Aorta (tissue), 5 donors: ENCODE measurements at regions of chr9 and their contacts with region 1.

Region 1: DNA sequence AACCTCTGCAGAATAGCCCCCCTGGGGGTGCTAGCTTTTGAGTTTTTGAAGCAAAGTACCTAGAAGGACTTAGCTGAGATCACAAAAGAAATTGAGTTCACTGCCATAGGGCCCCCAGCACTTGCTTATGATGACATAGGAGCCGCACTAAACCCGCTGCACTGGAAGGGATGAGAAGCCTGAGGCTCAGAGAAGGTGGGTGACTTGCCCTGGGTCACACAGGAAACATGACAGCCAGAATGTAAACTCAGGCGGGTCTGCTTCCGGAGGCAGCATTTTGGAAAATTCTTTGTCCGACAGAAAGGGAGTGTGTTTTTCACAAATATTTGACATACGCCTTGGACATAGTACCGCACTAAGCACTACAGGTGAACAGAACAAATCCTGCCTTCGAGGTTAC is 8.4 kb upstream of the TOR1B start:
- DNase-seq: no peak
- ATAC-seq: no peak
- H3K4me3 ChIP-seq: no peak overlapping the region
- H3K27ac ChIP-seq: no peak overlapping the region
- H3K4me1 ChIP-seq: no peaks in the 10 kb centered on the region
- H3K27me3 ChIP-seq: no peaks in the 10 kb centered on the region

Region 2: DNA sequence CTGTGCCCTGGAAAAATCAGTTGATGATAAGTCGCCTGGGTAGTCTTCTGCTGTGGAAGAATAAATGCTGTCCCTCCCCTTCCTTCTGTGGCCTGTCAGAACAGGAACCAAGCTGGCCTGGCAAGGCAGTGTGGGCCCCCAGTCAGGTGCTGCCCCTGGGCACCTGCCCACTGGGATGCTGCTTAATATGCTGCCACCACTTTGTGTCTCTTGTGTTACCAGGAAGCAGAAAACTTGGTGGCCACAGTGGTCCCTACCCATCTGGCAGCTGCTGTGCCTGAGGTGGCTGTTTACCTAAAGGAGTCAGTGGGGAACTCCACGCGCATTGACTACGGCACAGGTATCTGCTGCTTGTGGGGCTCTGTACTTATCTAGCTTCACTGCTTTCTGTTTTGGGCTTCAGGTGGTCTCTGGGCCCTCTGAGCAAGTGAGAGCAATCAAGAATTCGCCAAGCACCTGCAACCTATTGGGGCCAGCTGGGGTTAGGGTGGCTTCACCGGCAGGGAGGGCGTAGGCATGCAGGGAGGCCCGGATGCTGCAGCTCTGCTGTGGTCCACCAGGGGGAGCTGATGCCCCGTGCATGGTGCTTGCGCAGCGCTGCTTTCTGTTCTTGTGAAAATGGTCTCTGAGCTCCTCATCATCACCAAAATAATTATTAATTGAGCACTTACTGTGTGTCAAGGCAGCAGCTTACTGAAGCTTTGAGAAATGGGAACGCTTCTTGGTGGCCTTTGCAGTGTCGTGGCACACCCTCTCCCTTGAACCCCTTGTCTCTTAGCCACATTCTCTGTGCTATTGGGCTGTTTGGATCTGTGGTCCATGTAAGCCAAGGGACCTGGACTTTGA is 663.0 kb before region 1 on chr9:
- intact Hi-C with region 1: loop called (anchors 5 kb)
- DNase-seq: peak; percentile 84 to 93
- ATAC-seq: peak; percentile 92
- H3K4me3 ChIP-seq: no peak overlapping the region
- H3K27ac ChIP-seq: peak overlapping the region in 1 of 2 donors; percentile 38
- H3K4me1 ChIP-seq: no peaks in the 10 kb centered on the region
- H3K27me3 ChIP-seq: no peaks in the 10 kb centered on the region

Region 3: GRCh38 chr9:131060900-131061630 is 1266.5 kb after region 1 on chr9:
- intact Hi-C with region 1: no loop called
- DNase-seq: no peak
- ATAC-seq: no peak
- H3K4me3 ChIP-seq: no peak overlapping the region
- H3K27ac ChIP-seq: no peak overlapping the region
- H3K4me1 ChIP-seq: no peaks in the 10 kb centered on the region
- H3K27me3 ChIP-seq: no peaks in the 10 kb centered on the region